ENCODE measurements at regions of chr9 and their contacts with region 1.

Region 1: GRCh38 chr9:37079370-37080164 is 40.8 kb upstream of the ZCCHC7 start:
- DNase-seq: peak; percentile 97
- H3K4me3 ChIP-seq: peak overlapping the region; percentile 90
- H3K27ac ChIP-seq: peak overlapping the region; percentile 70
- H3K4me1 ChIP-seq: peaks cover 63% of the 10 kb centered on the region
- CTCF ChIP-seq: no peak

Region 2: GRCh38 chr9:37017546-37017945 is 62.0 kb before region 1 on chr9:
- CTCF ChIA-PET with region 1: no interaction called
- POLR2A ChIA-PET with region 1: no interaction called
- intact Hi-C with region 1: no loop called
- DNase-seq: no peak
- H3K4me3 ChIP-seq: no peak overlapping the region
- H3K27ac ChIP-seq: no peak overlapping the region
- H3K4me1 ChIP-seq: peaks cover 20% of the 10 kb centered on the region
- CTCF ChIP-seq: no peak

Region 3: GRCh38 chr9:37027582-37028419 is 51.8 kb before region 1 on chr9:
- CTCF ChIA-PET with region 1: interaction called, 16 read pairs
- POLR2A ChIA-PET with region 1: interaction called, 7 read pairs
- intact Hi-C with region 1: no loop called
- DNase-seq: peak; percentile 99
- H3K4me3 ChIP-seq: peak overlapping the region; percentile 88
- H3K27ac ChIP-seq: peak overlapping the region; percentile 95
- H3K4me1 ChIP-seq: peaks cover 78% of the 10 kb centered on the region
- CTCF ChIP-seq: peak; percentile 34; the same call in 1 of the 2 replicates

Region 4: DNA sequence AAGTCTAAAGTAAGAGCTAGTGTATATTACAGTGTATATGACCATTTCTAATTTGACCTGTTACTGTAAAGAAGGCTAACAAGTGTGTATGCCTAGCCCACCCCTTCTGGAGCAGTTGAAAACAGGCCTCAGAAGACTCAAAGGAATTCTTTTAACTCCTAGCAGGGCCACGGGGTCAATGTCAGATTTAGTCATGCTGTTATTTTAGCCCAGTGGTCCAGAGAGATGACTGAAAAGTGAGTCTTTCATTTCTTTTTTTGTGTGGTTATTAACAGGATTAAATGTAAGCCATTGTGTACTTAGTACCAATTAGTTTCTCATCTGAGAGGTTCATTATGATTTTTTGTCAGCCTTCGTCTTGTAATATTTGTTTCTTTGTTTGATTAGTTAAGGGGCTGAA is 65.2 kb after region 1 on chr9:
- CTCF ChIA-PET with region 1: no interaction called
- POLR2A ChIA-PET with region 1: interaction called, 5 read pairs
- intact Hi-C with region 1: loop called (anchors 5 kb)
- DNase-seq: peak; percentile 65
- H3K4me3 ChIP-seq: peak overlapping the region; percentile 61
- H3K27ac ChIP-seq: peak overlapping the region; percentile 74
- H3K4me1 ChIP-seq: peaks cover 85% of the 10 kb centered on the region
- CTCF ChIP-seq: no peak

Region 5: GRCh38 chr9:37293664-37294524 is 214.3 kb after region 1 on chr9:
- CTCF ChIA-PET with region 1: no interaction called
- POLR2A ChIA-PET with region 1: interaction called, 9 read pairs
- intact Hi-C with region 1: loop called (anchors 2 kb)
- DNase-seq: peak; percentile 97
- H3K4me3 ChIP-seq: peak overlapping the region; percentile 46
- H3K27ac ChIP-seq: peak overlapping the region; percentile 99
- H3K4me1 ChIP-seq: peaks cover 100% of the 10 kb centered on the region
- CTCF ChIP-seq: no peak